ENCODE measurements at regions of chr7 and their contacts with region 1.

Region 1: DNA sequence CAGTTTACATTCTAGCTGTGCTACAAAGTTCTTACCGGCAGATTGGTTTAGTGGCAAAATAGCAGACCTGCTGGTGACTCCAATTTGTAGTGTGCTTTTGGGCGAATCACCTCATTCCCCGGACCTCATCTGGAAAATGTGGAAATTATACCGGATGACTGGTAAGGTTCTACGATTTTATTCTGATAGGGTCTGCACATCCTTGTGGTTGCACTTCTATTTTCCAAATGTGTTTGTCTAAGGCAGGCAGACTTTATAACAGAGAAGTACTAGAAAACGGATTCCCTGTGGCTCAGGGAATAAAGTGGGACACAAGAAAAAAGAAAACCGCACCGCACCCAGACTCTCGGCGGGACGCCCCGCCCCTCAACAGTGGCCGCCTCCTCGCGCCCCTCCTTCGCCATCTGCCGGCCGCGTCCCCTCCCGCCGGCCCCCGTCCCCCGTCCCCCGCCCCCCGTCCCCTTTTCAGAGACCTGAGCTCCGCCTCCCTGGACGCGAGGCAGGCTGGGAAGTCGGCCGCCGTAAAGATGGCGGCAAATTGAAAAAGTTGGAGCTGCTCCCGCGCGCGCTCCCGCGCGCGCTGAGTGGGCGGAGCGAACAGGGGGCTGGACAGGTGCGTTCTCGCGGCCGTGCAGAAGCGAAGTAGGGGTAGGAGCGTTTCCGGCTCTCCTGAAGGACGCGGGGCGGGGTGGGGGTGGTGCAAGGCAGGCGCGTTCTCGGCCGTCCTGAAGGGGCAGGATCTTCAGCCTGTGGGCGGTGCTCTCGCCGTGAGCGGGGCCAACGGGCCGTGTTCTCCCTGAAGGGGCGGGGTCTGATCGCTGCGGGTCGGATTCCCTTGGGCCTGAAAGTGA is 531 bp upstream of the CCM2 start:
- DNase-seq: peak; percentile 100
- ATAC-seq: peak; percentile 90
- H3K4me3 Mint-ChIP-seq: peak overlapping the region; percentile 83
- H3K27ac Mint-ChIP-seq: peak overlapping the region; percentile 93
- H3K4me1 Mint-ChIP-seq: peaks cover 54% of the 10 kb centered on the region
- H3K27me3 Mint-ChIP-seq: no peaks in the 10 kb centered on the region
- CTCF ChIP-seq: no peak

Region 2: DNA sequence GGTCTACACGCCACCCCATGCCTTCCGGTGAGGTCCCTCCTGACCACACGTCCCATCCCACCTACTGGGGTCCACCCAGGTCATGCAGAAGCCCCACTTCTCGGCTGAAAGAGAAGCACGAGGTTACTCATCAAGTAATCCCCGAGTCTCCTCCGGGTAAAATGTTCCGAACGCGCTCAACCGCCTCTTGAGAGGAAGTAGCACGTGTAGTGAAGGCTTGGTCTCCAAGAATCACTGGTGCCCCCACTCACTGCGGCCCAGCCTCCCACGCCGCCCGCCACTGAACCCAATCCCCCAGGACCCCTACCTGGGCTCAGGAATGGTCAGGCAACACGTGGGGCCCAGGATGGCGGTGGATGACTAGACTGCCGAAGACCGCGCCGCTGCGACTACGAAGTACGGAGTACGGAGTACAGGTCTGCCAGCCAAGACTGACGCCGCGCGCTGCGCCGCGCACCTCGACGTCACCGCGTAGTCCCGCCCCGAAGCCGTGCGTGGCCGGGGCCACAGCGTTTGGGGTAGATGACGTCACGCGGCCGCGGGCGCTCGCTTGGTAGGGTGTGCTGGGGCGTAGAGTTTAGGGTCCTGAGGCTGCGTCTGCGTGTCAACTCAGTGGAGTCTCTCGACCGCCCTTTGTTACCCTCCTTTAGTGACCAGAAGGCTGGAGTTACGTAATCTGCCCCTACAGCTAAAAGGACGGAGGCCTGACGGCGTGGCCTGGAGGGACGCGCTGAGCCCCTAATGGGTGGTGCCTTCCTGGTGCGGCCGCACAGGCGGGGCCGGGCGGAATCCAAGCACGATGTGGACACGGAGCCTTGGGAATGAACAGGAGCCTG is 13.0 kb before region 1 on chr7:
- CTCF ChIA-PET with region 1: interaction called, 23 read pairs
- POLR2A ChIA-PET with region 1: interaction called, 328 read pairs
- intact Hi-C with region 1: loop called (anchors 2 kb)
- DNase-seq: peak; percentile 97
- ATAC-seq: peak; percentile 91
- H3K4me3 Mint-ChIP-seq: peak overlapping the region; percentile 100
- H3K27ac Mint-ChIP-seq: peak overlapping the region; percentile 100
- H3K4me1 Mint-ChIP-seq: peaks cover 48% of the 10 kb centered on the region
- H3K27me3 Mint-ChIP-seq: no peaks in the 10 kb centered on the region
- CTCF ChIP-seq: no peak

Region 3: GRCh38 chr7:45021604-45022296 is 22.3 kb after region 1 on chr7:
- CTCF ChIA-PET with region 1: interaction called, 13 read pairs
- POLR2A ChIA-PET with region 1: interaction called, 46 read pairs
- intact Hi-C with region 1: no loop called
- DNase-seq: peak; percentile 34
- ATAC-seq: peak; percentile 79
- H3K4me3 Mint-ChIP-seq: no peak overlapping the region
- H3K27ac Mint-ChIP-seq: peak overlapping the region; percentile 70
- H3K4me1 Mint-ChIP-seq: peaks cover 36% of the 10 kb centered on the region
- H3K27me3 Mint-ChIP-seq: no peaks in the 10 kb centered on the region
- CTCF ChIP-seq: no peak

Region 4: DNA sequence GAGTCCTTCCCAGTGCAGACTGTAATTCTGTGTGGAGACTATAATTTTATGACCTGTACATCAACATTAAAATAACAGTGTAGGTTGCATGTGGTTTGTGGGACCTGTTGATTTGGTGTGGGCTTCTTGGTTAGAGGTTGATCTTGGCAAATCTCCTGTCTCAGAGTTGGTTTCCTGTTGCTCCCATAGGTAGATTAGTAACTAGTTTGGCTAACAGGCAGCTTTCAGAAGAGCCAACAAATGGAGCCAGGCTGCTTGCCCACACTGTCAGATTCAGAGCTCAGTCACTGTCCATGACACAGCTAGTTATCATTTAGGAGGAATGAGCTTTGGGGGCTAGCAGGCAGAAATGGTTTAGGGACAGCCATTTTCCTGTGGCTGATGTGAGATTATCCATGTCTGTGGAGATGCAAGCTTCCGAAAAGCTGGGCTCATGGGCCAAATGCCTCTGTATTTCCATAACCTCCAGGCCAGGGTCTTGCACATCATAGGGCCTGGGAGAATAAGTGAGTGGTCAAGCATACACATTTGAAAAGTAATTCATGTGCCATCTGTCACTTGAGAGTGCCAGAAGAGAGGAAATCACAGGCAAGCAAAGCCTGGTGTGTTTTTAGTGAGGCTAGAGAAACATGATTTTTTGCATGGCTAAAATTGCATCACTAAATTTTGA is 33.9 kb after region 1 on chr7:
- CTCF ChIA-PET with region 1: interaction called, 10 read pairs
- POLR2A ChIA-PET with region 1: interaction called, 46 read pairs
- intact Hi-C with region 1: no loop called
- DNase-seq: peak; percentile 51
- ATAC-seq: peak; percentile 55
- H3K4me3 Mint-ChIP-seq: peak overlapping the region; percentile 11
- H3K27ac Mint-ChIP-seq: peak overlapping the region; percentile 85
- H3K4me1 Mint-ChIP-seq: peaks cover 78% of the 10 kb centered on the region
- H3K27me3 Mint-ChIP-seq: no peaks in the 10 kb centered on the region
- CTCF ChIP-seq: no peak

Region 5: GRCh38 chr7:45178241-45179225 is 179.1 kb after region 1 on chr7:
- CTCF ChIA-PET with region 1: no interaction called
- POLR2A ChIA-PET with region 1: no interaction called
- intact Hi-C with region 1: no loop called
- DNase-seq: peak; percentile 26
- ATAC-seq: peak; percentile 34
- H3K4me3 Mint-ChIP-seq: no peak overlapping the region
- H3K27ac Mint-ChIP-seq: no peak overlapping the region
- H3K4me1 Mint-ChIP-seq: no peaks in the 10 kb centered on the region
- H3K27me3 Mint-ChIP-seq: peaks cover 5% of the 10 kb centered on the region
- CTCF ChIP-seq: no peak